ENCODE measurements at regions of chr9 and their contacts with region 1.

Region 1: DNA sequence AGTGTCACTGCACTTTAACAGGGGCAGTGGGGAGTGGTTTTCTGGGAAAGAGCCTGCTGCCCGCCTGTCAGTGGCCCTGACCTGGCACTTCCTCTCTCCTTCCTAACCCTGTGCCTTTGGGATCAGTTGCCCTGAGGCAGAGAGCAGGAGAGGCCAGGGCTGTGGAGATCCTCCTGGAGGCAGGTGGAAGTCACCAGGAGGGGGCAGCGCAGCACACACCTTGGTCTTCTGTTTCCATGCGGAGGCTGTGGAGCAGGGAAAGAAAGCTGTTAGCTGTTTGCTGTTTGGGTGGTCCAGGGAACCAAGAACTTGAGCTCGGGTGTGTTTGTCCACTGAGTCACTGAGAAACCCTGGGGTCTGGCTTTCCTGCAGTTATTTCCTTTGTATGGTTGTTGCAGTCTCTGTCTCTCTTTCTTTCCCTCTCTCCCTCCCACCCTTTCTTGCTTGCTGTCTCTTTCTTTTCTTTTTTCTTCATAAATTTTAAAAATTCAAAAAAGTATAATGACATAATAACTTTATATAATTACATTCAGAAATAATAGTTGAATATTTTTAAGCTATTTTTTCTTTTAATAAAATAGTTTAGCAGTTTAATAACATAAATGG is 28.1 kb downstream of the NTRK2 start:
- DNase-seq: peak; percentile 55
- CTCF ChIP-seq: peak; percentile 93

Region 2: GRCh38 chr9:84781458-84781857 is 83.8 kb after region 1 on chr9:
- in situ Hi-C with region 1: loop called (anchors 10 kb)
- DNase-seq: peak; percentile 15
- CTCF ChIP-seq: peak; percentile 64

Region 3: GRCh38 chr9:84953797-84954705 is 256.4 kb after region 1 on chr9:
- in situ Hi-C with region 1: loop called (anchors 10 kb)
- DNase-seq: peak; percentile 77
- CTCF ChIP-seq: peak; percentile 95

Region 4: GRCh38 chr9:85142968-85143367 is 445.4 kb after region 1 on chr9:
- in situ Hi-C with region 1: loop called (anchors 25 kb)
- DNase-seq: peak; percentile 35
- CTCF ChIP-seq: peak; percentile 74

Region 5: DNA sequence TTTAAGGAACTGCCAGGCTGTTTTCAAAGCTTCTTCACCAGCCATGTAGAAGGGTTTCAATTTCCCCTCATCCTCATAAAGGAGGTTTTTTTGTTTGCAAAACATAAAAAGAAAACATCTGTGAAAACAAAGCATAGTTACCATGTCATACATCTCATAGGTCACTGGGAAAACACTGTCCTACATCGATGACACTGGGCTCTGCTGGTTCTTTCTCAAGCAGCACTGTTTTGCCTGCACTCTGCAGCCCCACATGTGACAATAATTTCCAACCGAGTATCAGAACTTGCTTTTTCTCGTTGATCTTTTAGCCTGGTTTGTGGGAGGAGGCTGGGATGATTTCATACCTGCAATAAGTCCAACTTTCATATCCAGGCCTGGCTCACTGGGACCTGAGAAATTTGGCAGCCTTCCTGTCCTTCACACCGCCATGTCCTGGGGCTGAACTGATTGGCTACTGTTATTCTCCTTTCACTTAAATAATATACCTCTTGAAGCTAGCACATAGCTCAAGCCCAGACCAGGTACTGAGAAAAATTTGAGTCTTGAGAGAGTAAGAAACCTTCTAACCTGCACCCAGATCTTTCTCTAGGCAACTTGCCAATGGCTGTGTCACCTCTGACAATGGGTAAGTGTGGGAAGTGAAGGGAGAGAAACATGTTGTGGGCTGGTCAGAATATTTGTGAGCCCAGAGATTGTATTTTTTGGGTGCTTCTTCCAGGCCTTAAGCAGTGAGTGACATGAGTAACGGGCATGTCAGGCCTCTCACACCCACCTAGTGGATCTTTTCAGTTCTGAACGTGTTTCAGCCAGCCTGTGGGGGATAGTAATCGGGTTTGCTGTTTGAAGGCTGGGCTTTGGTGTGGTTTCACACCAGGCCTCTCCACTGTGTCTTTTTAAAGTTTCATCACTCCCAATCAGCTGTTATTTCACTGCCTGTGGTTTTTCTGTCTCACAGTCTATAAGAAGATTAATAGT is 474.7 kb after region 1 on chr9:
- in situ Hi-C with region 1: no loop called
- DNase-seq: peak; percentile 23
- CTCF ChIP-seq: no peak

Measured in GM13977 (cell line).